ENCODE measurements at regions of chr13 and their contacts with region 1.

Region 1: GRCh38 chr13:46126552-46127357 is 21.9 kb upstream of the CPB2 start:
- DNase-seq: peak; percentile 91
- H3K4me3 Mint-ChIP-seq: no peak overlapping the region
- H3K27ac Mint-ChIP-seq: peak overlapping the region; percentile 76
- H3K4me1 Mint-ChIP-seq: peaks cover 38% of the 10 kb centered on the region
- H3K27me3 Mint-ChIP-seq: no peaks in the 10 kb centered on the region

Region 2: GRCh38 chr13:45036206-45036605 is 1090.5 kb before region 1 on chr13:
- CTCF ChIA-PET with region 1: no interaction called
- intact Hi-C with region 1: no loop called
- DNase-seq: no peak
- H3K4me3 Mint-ChIP-seq: no peak overlapping the region
- H3K27ac Mint-ChIP-seq: no peak overlapping the region
- H3K4me1 Mint-ChIP-seq: no peaks in the 10 kb centered on the region
- H3K27me3 Mint-ChIP-seq: no peaks in the 10 kb centered on the region

Region 3: DNA sequence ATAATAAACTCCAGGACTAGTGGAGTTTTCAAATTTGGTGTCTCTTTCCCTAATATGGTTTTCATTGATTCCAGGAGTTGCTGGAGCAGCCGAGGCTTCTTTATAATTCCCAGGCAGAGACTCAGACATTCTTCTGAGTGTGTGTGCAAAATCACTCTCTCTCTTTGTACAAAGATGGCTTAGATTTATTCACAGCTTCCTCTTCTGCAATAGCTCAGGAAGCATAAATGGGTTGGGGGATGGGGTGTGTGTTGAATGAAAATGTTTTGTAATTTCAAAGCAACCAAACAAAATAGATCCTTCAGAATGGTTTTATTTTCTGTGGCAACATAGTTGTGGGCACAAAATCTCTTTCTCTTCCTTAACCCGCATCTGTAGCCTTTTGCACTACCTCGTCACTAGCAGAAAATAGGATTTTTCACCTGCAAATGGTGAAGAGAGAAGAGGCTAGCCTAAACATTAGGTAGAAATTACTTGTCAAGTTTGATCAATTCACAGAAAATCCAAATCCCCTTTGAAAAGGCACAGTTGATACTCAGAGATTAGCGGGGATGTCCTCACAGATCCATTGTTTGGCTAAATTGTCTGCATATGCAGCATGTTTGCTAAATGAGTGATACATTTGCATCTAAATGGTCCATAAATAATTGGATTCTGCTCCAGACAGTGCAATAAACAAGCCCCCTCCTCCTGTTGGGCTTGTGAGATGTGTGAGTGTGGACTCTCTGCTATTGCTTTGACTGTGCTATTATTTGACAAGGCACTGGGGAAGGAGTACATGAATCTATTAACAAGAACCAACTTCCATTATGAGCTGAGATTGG is 357.9 kb before region 1 on chr13:
- CTCF ChIA-PET with region 1: no interaction called
- intact Hi-C with region 1: no loop called
- DNase-seq: no peak
- H3K4me3 Mint-ChIP-seq: no peak overlapping the region
- H3K27ac Mint-ChIP-seq: no peak overlapping the region
- H3K4me1 Mint-ChIP-seq: peaks cover 4% of the 10 kb centered on the region
- H3K27me3 Mint-ChIP-seq: no peaks in the 10 kb centered on the region

Region 4: DNA sequence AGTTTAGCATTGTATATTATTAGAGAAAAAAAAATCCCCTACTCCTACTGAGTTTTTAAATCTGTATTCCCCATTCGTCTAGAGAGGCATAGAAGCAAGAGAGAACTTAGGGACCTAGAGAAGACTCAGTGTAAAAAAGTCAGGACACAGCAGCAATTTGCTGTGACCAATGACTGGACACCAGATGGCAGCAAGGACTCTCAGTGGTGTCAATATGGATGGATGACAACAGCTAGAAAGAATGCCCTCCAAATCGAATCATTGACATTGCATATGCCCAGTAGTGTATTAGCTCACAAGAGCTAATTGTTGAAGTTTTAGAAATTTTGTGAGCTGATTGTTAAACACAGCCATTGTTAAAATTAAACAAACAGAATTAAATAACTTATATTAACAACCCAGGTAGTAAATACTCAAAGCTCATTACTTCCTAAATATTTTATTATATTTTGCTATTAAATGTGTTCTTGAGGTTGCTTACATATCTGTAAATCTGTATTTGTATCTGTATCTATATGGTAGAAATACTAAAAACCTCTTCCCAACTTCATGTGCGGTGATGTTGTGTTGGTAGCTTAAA is 319.1 kb before region 1 on chr13:
- CTCF ChIA-PET with region 1: no interaction called
- intact Hi-C with region 1: loop called (anchors 1 kb)
- DNase-seq: peak; percentile 55
- H3K4me3 Mint-ChIP-seq: no peak overlapping the region
- H3K27ac Mint-ChIP-seq: no peak overlapping the region
- H3K4me1 Mint-ChIP-seq: no peaks in the 10 kb centered on the region
- H3K27me3 Mint-ChIP-seq: no peaks in the 10 kb centered on the region

Region 5: DNA sequence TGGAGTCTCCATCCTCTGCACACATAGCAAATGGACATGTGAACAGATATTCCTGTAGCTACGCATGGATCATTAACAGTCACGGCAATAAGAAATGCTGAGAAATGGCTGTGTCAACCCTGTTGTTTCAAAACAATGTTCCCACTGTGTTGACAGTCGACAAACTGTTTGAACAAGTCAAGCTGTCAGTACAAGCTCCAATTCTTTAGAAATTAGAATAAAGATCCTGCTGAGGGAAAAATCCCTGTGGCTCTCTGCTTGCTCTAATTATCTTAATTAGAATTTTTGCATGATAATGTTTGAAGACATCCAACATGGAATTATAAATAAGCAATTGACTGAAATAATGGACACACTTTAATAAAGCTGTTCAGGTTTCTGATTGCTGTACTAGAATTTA is 16.0 kb after region 1 on chr13:
- CTCF ChIA-PET with region 1: interaction called, 25 read pairs
- intact Hi-C with region 1: no loop called
- DNase-seq: no peak
- H3K4me3 Mint-ChIP-seq: no peak overlapping the region
- H3K27ac Mint-ChIP-seq: peak overlapping the region; percentile 48
- H3K4me1 Mint-ChIP-seq: peaks cover 45% of the 10 kb centered on the region
- H3K27me3 Mint-ChIP-seq: no peaks in the 10 kb centered on the region

Region 6: DNA sequence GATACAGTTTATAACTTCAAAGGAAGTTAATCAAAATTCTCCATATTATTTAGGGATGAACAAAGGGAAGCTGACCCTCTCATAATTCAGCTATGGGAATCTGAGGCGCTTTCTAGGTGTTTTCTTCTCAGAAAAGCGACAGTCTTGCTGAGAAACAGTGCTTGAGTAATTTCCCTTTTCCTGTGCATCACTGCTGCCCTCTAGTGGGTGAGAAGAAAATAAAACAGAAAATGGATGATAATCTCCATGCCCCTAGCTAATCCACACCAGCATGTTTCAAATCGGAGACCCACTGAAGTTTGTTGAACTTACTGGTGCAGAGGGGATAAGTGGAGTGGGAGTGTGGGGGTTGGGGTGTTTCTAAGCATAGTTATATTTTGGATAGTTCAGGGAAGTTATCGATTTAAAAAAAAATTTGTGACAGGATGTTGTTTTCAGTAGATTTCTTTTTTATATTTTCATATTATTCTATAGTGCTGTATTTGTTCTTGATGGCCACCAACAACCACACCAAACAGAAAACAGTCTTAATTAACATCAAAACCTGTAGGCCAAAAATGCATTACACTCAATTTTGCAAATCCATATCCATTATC is 33.8 kb after region 1 on chr13:
- CTCF ChIA-PET with region 1: interaction called, 16 read pairs
- intact Hi-C with region 1: loop called (anchors 1 kb)
- DNase-seq: peak; percentile 51
- H3K4me3 Mint-ChIP-seq: peak overlapping the region; percentile 51
- H3K27ac Mint-ChIP-seq: peak overlapping the region; percentile 94
- H3K4me1 Mint-ChIP-seq: peaks cover 67% of the 10 kb centered on the region
- H3K27me3 Mint-ChIP-seq: no peaks in the 10 kb centered on the region

Region 7: GRCh38 chr13:46387064-46387851 is 260.5 kb after region 1 on chr13 and contains the start of gene RUBCNL:
- CTCF ChIA-PET with region 1: no interaction called
- intact Hi-C with region 1: loop called (anchors 5 kb)
- DNase-seq: peak; percentile 77
- H3K4me3 Mint-ChIP-seq: peak within 1 kb of the TSS; percentile 77
- H3K27ac Mint-ChIP-seq: no peak within 1 kb of the TSS
- H3K4me1 Mint-ChIP-seq: peaks cover 22% of the 10 kb centered on the region
- H3K27me3 Mint-ChIP-seq: peaks cover 28% of the 10 kb centered on the region
- total RNA-seq, gene RUBCNL: 3.6 to 3.7 TPM